Calu3 (cell line): ENCODE measurements at regions of chrX and their contacts with region 1.

Region 1: DNA sequence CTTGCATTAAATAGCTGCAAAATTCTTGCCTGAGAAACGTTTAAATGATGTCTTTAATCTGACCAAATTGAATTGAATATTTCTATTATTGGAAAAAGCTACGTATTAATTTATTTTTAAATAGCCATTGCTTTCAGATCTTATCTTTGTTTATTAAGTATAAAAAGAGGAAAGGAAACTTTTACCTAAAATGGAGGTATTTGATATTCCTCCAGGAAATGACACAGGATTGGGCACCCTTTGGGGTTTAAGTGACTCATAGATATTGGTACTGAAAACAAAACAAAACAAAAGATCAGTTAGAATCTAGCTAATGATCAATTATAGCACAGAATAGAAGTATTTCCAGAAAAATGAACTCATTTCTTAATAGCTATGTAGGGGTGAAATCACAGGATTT is 34.1 kb downstream of the PLS3 start:
- DNase-seq: no peak
- H3K4me3 Mint-ChIP-seq: peak overlapping the region; percentile 63
- H3K27ac Mint-ChIP-seq: peak overlapping the region; percentile 83
- H3K4me1 Mint-ChIP-seq: peaks cover 33% of the 10 kb centered on the region
- H3K27me3 Mint-ChIP-seq: no peaks in the 10 kb centered on the region
- CTCF ChIP-seq: no peak

Region 2: GRCh38 chrX:115584696-115585095 is 10.4 kb before region 1 on chrX:
- CTCF ChIA-PET with region 1: interaction called, 4 read pairs
- intact Hi-C with region 1: loop called (anchors 1 kb)
- DNase-seq: no peak
- H3K4me3 Mint-ChIP-seq: no peak overlapping the region
- H3K27ac Mint-ChIP-seq: no peak overlapping the region
- H3K4me1 Mint-ChIP-seq: peaks cover 48% of the 10 kb centered on the region
- H3K27me3 Mint-ChIP-seq: no peaks in the 10 kb centered on the region
- CTCF ChIP-seq: no peak

Region 3: DNA sequence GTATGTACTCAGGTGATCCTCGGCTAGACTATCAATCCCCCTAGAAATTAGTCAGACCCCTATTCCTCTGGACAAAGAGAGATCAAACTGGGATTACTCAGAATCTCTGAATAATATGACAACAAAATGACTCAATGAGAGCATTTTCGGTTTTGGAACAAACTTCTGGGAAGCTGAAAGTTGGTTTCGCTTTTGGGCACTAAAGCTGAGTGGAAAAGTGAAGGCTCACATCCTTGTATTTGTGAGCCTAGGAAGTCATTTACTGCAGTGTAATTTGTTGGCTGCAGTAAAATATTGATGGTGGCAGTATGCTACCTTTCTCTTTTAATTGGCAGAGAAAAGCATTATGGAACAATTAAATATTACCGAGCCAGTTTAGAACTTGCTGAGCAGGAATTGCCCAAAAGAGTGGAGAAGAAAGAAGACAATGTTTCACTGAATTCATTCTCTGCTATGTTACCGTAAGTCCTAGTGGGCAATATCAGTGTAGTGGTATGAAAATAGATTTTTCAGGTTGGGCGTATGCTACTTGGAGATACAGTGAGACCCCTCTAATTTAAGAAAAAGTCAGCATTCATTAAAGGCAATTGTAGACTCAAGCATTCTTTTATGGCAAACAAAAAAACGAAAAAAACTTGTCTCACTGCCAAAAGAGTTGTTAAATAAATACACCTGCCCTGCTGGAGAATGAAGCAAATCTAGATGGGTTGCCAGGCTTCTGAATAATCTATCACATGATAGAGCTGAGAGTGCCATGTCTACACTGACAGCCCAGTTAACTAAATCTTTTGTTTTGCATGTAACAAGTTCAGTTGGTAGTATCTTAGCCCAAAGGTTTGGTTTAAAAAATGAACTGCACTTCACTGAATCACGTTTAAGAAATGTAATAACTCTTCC is 645.1 kb after region 1 on chrX:
- CTCF ChIA-PET with region 1: no interaction called
- intact Hi-C with region 1: no loop called
- DNase-seq: no peak
- H3K4me3 Mint-ChIP-seq: peak overlapping the region; percentile 68
- H3K27ac Mint-ChIP-seq: peak overlapping the region; percentile 95
- H3K4me1 Mint-ChIP-seq: peaks cover 33% of the 10 kb centered on the region
- H3K27me3 Mint-ChIP-seq: no peaks in the 10 kb centered on the region
- CTCF ChIP-seq: no peak